MCF 10A (cell line): ENCODE measurements at regions of chr1 and their contacts with region 1.

Region 1: DNA sequence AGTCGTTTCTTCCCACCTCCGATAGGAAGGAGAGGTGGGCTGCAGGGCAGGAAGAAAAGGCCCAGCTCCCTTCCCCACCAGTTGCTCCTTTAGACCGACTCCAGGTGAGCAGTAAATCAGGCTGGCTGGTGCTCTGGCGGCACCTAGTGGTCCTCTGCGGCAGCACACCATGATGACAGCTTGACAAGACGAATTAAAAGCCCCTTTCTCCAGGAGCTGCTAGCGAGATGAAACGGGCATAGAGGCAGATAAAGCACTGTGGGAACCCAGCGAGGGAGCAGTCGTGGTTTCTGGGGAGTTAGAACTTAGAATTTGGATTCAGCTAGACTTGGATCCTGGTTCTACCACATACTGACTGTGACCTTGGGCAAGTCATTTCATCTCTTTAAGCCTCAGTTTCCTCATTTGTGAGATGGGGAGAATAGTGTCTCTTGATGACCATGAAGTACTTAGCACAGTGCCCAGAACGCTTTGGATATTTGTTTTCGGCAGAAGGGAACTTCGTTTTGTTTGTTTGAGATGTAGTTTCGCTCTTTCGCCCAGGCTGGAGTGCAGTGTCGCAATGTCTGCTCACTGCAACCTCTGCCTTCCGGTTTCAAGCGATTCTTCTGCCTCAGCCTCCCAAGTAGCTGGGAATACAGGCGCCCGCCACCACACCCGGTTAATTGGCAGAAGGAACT is 21.8 kb upstream of the COL9A2 start:
- DNase-seq: peak; percentile 79
- H3K4me3 Mint-ChIP-seq: no peak overlapping the region
- H3K27ac Mint-ChIP-seq: no peak overlapping the region
- H3K4me1 Mint-ChIP-seq: peaks cover 6% of the 10 kb centered on the region
- H3K27me3 Mint-ChIP-seq: peaks cover 18% of the 10 kb centered on the region
- CTCF ChIP-seq: peak; percentile 98

Region 2: GRCh38 chr1:40143891-40144575 is 194.9 kb before region 1 on chr1:
- CTCF ChIA-PET with region 1: interaction called, 182 read pairs
- POLR2A ChIA-PET with region 1: interaction called, 6 read pairs
- intact Hi-C with region 1: loop called (anchors 1 kb)
- DNase-seq: peak; percentile 87
- H3K4me3 Mint-ChIP-seq: no peak overlapping the region
- H3K27ac Mint-ChIP-seq: no peak overlapping the region
- H3K4me1 Mint-ChIP-seq: peaks cover 10% of the 10 kb centered on the region
- H3K27me3 Mint-ChIP-seq: peaks cover 74% of the 10 kb centered on the region
- CTCF ChIP-seq: peak; percentile 61

Region 3: DNA sequence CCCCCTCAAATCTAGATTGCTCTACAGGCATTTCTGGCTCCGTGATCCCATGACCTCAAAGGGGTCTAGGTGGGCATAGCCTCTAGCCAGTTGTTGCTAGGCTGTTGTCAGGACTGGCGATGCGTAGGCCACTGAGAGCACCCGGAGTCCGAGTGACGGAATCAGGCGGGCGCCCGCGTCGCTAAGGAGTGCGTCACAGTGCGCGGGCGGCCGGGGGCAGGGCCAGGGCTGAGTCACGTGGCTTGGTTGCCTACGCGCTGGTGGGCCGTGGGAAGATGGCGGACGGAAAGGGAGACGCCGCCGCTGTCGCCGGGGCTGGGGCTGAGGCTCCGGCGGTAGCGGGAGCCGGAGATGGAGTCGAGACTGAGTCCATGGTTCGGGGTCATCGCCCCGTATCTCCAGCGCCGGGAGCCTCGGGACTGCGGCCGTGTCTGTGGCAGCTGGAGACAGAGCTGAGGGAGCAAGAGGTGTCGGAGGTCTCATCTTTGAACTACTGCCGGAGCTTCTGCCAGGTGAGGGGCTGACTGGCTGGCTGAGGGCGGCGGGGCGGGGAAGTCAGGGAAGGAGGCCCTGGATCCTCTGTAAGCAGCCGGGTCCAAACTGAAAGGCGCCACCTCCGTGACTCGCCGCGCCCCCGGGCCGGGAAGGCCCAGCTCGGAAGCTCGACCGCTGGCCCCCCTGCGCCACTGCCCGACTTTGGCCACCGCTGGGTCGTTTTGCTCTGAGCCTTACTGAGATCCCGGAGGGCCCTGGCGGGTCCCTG is 177.6 kb before region 1 on chr1 and contains the start of gene RLF:
- CTCF ChIA-PET with region 1: interaction called, 13 read pairs
- POLR2A ChIA-PET with region 1: interaction called, 6 read pairs
- intact Hi-C with region 1: no loop called
- DNase-seq: peak; percentile 92
- H3K4me3 Mint-ChIP-seq: no peak within 1 kb of the TSS
- H3K27ac Mint-ChIP-seq: no peak within 1 kb of the TSS
- H3K4me1 Mint-ChIP-seq: peaks cover 6% of the 10 kb centered on the region
- H3K27me3 Mint-ChIP-seq: no peaks in the 10 kb centered on the region
- CTCF ChIP-seq: no peak
- total RNA-seq, gene RLF: 8.8 and 11.2 TPM in 2 replicates

Region 4: DNA sequence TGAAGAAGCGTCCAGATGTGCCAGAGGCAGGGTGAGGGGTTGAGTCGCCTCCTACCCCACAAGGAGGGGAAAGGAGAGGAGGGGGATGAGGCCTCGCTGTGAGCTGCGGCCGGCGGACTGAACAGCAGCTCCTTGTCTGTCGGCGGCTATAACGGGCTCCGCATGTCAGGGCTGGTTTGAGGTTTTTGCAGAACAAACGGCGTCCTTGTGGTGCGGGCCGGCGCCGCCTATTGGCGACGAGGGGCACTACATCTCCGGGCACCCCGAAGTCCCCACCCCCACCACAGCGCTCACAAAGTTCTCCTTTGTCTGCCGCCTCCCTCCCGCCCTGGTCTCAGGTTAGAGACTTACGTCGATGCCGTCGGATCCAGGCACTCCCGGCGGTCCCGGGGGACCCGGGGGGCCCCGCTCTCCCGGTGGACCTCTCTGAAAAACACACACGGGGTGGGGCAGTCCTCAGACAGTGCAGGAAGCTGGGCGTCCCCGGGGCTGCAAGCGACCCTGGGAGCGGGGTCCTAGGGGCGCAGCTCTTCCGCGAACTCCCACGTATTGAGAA is 23.6 kb before region 1 on chr1:
- CTCF ChIA-PET with region 1: interaction called, 18 read pairs
- POLR2A ChIA-PET with region 1: no interaction called
- intact Hi-C with region 1: no loop called
- DNase-seq: peak; percentile 74
- H3K4me3 Mint-ChIP-seq: peak overlapping the region; percentile 17
- H3K27ac Mint-ChIP-seq: no peak overlapping the region
- H3K4me1 Mint-ChIP-seq: peaks cover 7% of the 10 kb centered on the region
- H3K27me3 Mint-ChIP-seq: peaks cover 34% of the 10 kb centered on the region
- CTCF ChIP-seq: peak; percentile 92

Region 5: DNA sequence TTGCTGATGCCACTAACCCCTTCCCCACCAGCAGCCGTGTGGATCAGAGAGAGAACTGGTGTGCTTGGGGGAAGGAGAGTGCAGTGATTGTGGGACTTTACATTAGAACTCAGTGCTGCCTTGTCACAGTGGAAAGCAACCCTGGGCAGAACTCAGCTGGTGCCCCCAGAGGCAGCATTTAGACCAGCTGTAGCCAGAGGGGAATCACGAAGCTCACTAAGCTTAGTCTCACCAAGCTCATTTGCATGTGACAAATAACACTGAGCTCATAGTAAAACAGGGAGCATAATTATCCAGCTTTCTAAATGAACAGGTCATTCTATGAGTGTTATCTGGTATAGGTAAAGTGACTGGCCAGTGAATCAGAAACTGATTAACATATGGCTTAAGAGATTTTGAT is 24.8 kb after region 1 on chr1:
- CTCF ChIA-PET with region 1: interaction called, 10 read pairs
- POLR2A ChIA-PET with region 1: no interaction called
- intact Hi-C with region 1: no loop called
- DNase-seq: no peak
- H3K4me3 Mint-ChIP-seq: no peak overlapping the region
- H3K27ac Mint-ChIP-seq: no peak overlapping the region
- H3K4me1 Mint-ChIP-seq: no peaks in the 10 kb centered on the region
- H3K27me3 Mint-ChIP-seq: no peaks in the 10 kb centered on the region
- CTCF ChIP-seq: no peak

Region 6: GRCh38 chr1:40404670-40405462 is 66.0 kb after region 1 on chr1:
- CTCF ChIA-PET with region 1: interaction called, 18 read pairs
- POLR2A ChIA-PET with region 1: interaction called, 3 read pairs
- intact Hi-C with region 1: loop called (anchors 2 kb)
- DNase-seq: peak; percentile 70
- H3K4me3 Mint-ChIP-seq: no peak overlapping the region
- H3K27ac Mint-ChIP-seq: no peak overlapping the region
- H3K4me1 Mint-ChIP-seq: peaks cover 4% of the 10 kb centered on the region
- H3K27me3 Mint-ChIP-seq: no peaks in the 10 kb centered on the region
- CTCF ChIP-seq: peak; percentile 63